ENCODE measurements at regions of chr13 and their contacts with region 1.

Region 1: GRCh38 chr13:28544026-28544425 is 49.1 kb upstream of the FLT1 start:
- DNase-seq: no peak

Region 2: GRCh38 chr13:28497143-28497876 is 46.7 kb before region 1 on chr13:
- intact Hi-C with region 1: loop called in 1 of 2 experiments (anchors 1 kb)
- DNase-seq: no peak

Region 3: GRCh38 chr13:28574617-28575142 is 30.7 kb after region 1 on chr13:
- intact Hi-C with region 1: no loop called
- DNase-seq: peak; percentile 74

Region 4: DNA sequence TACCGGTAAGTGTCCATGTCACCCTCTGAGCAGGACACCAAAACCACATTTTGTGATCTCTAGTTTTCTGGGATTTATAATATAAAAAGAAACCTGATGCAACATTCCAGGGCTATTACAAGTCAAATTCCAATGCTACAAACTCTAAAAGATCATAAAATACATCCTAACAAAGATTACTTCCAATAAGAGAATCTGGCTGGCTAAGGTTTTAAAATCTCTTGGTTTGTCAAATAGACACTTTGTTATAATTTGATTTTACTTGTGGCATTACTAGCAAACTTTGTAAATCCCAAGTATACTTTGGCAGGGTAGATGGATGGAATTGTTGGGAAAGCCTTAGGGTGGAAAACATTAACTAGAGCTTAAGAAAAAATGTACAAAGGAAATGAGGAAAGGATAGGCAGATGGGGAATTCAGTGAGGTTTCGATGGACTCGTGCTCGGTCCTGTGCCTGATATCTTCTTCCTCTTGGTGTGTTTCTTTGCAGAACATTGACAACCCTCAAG is 40.9 kb after region 1 on chr13:
- intact Hi-C with region 1: loop called in 1 of 2 experiments (anchors 1 kb)
- DNase-seq: no peak